ENCODE measurements at regions of chr20 and their contacts with region 1.

Region 1: DNA sequence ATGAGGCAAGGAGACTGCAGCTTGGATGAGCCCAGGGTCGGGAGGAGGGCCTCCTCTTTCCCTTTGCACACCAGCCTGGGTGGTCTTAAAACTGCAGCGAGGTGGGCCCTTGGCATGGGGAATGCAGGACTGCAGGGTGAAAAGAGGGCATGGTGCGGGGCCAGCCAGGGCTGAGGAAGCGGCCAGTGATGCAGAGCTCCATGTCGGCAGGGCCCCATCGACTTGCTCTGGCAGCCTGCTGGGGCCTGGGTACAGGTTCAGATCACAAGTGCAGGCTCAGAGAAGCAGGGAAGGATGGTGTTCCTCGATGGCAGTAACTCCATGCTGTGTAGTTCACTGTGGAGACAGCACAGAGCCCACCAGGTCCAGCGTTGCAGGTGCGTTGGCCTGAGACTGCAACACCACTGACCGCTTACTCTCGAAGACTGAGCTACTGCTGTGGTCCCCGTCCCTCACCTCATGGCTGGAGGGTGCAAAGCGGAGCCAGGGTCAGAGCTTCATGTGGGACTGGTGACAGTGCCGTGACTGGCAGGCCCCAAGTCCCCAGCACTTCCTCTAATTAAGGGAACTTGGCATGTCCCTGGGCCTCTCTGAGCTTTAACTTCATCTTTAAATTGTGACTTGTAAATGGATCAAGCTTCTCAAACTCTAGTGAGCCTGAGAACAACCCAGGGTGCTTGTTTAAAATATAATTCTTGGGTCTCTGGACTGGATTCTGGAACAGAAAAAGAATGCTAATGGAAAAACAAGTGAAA is 223.2 kb downstream of the SYNDIG1 start:
- DNase-seq: no peak
- H3K4me3 ChIP-seq: no peak overlapping the region
- H3K27ac ChIP-seq: no peak overlapping the region
- H3K4me1 ChIP-seq: no peaks in the 10 kb centered on the region
- H3K27me3 ChIP-seq: no peaks in the 10 kb centered on the region
- CTCF ChIP-seq: no peak
- POLR2A ChIP-seq: no peak

Region 2: DNA sequence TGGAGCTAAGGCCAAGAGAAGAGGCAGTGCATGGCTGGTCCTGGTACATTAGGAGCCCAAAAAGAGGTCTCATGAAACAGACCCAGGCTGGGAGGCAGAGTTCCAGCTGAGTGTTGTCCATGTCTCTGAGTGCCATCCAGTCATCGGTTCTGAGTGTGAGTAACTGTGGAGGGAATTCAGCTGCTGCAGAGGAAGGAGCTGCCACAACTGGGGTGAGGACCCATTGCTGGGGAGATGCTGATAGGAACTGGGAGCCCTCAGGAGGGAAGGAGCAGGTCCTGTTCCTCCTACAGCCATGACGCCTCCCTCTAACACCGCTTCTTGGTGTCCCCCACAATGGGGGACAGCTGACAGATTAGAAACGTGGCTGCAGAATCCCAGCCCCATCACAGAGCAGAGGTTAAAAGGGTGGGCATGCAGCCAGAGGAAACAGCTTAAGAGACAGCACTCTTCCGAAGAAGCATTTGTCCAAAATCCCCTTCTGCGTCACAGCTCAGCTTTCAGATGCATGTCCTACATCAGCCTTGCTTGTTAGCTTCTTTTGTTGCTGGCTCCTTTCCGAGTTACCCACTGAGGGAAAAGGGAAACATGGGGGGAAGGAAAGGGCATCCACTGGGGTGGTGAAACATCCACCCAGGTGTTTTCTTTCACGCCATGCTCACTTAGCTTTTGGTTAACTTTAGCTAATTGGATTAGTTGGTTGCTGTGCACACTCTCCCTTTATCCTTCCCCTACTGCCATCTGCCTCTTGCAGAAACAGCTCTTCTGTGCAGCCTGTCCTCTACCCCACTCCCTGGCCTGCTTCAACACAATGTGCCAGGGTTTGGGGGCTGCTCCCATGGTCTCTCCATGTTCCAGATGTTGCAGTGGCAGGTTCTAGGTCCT is 16.0 kb after region 1 on chr20:
- CTCF ChIA-PET with region 1: no interaction called
- POLR2A ChIA-PET with region 1: no interaction called
- dilution Hi-C with region 1: no loop called
- intact Hi-C with region 1: loop called (anchors 1 kb)
- DNase-seq: no peak
- H3K4me3 ChIP-seq: no peak overlapping the region
- H3K27ac ChIP-seq: no peak overlapping the region
- H3K4me1 ChIP-seq: no peaks in the 10 kb centered on the region
- H3K27me3 ChIP-seq: no peaks in the 10 kb centered on the region
- CTCF ChIP-seq: no peak
- POLR2A ChIP-seq: no peak

Region 3: DNA sequence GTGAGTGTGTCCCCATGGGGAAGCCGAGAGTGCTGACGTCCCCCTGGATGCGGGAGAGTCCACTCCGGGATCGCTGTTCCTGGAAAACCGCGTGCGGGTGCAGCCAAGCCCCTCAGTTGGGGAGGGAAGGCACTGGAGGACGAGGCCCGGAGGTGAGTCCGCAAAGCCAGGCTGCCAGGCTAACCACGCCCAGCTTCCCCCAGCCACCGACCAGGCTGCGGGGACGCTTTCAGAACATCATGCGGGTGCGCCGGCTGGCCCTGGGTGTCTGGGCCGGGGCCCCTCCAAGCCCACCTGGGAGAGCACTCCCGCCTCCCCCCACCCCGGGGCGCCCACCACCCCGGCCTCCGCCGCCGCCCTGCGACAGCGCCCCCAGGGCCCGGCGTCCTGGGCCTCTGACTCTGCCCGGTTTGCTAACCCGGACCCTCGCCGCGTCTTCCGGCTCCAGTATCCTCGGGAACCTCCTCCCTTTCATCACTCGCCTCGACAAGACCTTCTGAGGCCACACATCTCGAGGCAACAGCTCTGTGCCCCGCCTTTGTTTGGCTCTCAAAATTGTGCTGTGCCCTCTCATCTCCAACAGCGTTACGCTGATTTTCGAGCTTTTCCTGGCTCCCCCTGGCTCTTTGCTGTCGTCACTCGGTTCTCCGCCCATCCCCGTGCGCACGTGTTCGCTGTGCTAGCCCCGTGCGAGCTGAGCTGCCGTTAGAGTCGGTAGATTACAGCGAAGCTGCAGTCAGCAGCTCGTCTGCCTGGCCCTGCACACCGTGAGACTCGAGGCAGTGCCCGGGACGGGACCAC is 455.8 kb after region 1 on chr20:
- CTCF ChIA-PET with region 1: no interaction called
- POLR2A ChIA-PET with region 1: no interaction called
- dilution Hi-C with region 1: no loop called
- intact Hi-C with region 1: no loop called
- DNase-seq: peak; percentile 16
- H3K4me3 ChIP-seq: peak overlapping the region in 2 of 3 experiments; percentile 2 to 3
- H3K27ac ChIP-seq: no peak overlapping the region
- H3K4me1 ChIP-seq: peaks cover 3% of the 10 kb centered on the region
- H3K27me3 ChIP-seq: peaks cover 14 to 17% of the 10 kb centered on the region in 2 experiments
- CTCF ChIP-seq: no peak
- POLR2A ChIP-seq: no peak